Tibial artery (tissue), 4 donors: ENCODE measurements at regions of chr11 and their contacts with region 1.

Region 1: DNA sequence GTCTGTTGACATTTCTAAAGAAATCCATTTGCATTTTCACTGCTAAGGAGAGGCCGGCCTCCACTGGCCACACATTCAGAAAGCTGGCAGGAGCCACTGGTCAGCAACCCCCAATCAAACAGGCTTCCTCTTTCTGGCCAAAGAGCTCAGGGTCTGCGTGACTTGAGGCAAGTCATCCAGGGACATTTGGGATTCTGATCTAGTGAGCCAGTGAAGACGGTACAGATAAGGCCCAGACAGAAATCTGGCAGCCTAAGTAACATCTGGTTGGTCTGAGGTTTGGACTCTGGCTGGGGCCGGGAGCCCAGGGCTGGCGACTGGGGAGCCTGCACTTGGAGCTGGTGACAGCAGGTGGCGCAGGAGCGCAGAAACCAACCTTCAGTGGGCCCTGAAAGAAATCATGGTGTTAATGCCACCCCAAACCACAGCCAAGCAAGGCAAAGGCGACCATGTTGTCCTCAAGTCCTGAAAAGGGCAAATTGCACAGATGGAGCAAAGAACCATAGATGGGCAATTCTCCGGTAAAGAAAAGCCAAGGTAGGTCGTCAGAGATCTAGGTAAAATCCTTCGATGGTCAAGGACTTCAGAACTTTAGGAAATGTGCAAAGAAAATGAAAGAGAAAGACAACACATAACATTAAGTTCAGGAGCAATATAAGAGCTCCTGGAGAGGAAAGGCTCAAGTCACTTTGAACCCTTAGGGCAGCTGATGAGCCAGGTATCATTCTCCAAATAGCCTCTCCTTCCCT is 99.4 kb upstream of the BLID start:
- DNase-seq: peak; percentile 75 to 88
- H3K4me3 ChIP-seq: no peak overlapping the region
- H3K27ac ChIP-seq: peak overlapping the region; percentile 76 to 77
- H3K4me1 ChIP-seq: peaks cover 0 to 54% (median 28%) of the 10 kb centered on the region in 4 donors
- H3K27me3 ChIP-seq: no peaks in the 10 kb centered on the region
- CTCF ChIP-seq: peak; percentile 87 to 94

Region 2: GRCh38 chr11:122267602-122268001 is 52.2 kb after region 1 on chr11:
- intact Hi-C with region 1: no loop called
- DNase-seq: no peak
- H3K4me3 ChIP-seq: no peak overlapping the region
- H3K27ac ChIP-seq: no peak overlapping the region
- H3K4me1 ChIP-seq: no peaks in the 10 kb centered on the region
- H3K27me3 ChIP-seq: no peaks in the 10 kb centered on the region
- CTCF ChIP-seq: no peak

Region 3: GRCh38 chr11:122367809-122368231 is 152.4 kb after region 1 on chr11:
- intact Hi-C with region 1: loop called (anchors 10 kb)
- DNase-seq: peak in 1 of 2 donors; percentile 34
- H3K4me3 ChIP-seq: peak overlapping the region; percentile 17 to 25
- H3K27ac ChIP-seq: peak overlapping the region; percentile 65 to 73
- H3K4me1 ChIP-seq: peaks cover 0 to 39% (median 12%) of the 10 kb centered on the region in 4 donors
- H3K27me3 ChIP-seq: no peaks in the 10 kb centered on the region
- CTCF ChIP-seq: no peak

Region 4: GRCh38 chr11:122491509-122491908 is 276.1 kb after region 1 on chr11:
- intact Hi-C with region 1: loop called (anchors 5 kb)
- DNase-seq: no peak
- H3K4me3 ChIP-seq: no peak overlapping the region
- H3K27ac ChIP-seq: no peak overlapping the region
- H3K4me1 ChIP-seq: peaks cover 0 to 24% (median 4%) of the 10 kb centered on the region in 4 donors
- H3K27me3 ChIP-seq: no peaks in the 10 kb centered on the region
- CTCF ChIP-seq: no peak